ENCODE measurements at regions of chr3 and their contacts with region 1.

Region 1: DNA sequence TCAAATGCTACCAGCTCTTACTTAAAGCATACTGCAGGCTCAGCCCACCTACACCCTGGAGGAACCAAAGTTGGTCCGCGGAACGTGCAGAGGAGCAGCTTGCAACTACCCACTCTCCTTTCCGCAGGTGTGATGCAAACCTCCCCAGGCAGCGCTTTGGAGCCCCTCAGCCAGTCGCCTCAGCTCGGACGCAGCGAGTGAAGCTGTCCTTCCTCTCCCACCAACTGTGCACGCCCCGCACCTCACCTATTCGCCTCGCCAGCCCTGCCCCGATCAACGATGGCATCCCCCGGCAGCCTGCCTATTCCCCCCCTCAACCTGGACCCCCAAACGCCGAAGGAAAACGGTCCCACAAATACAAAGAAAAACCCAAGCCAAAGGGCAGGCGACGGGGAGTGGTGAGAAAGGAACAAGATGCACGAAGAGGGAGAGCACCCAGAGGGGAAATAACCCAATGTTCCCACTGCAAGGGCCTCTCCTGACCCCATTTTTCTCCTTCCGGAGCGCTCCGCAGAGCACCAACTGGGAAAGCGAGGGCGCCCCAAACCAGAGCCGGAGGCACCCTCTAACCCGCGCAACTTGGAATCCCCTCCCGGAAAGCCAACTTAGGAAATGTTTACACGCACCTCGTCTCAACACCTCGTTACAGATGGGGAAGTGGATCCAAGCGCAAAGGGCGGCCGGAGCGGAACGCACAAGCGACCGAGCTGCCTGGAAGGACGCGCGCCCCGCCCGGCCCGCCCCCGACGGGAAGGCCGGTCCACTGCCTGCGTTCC is 665 bp downstream of the GLB1 start:
- DNase-seq: peak; percentile 51 to 72 (median 63)
- H3K4me3 ChIP-seq: peak overlapping the region; percentile 77 to 98 (median 85)
- H3K4me3 Mint-ChIP-seq: peak overlapping the region; percentile 99
- H3K27ac ChIP-seq: peak overlapping the region; percentile 79 to 97
- H3K27ac Mint-ChIP-seq: peak overlapping the region; percentile 93 to 97 (median 96)
- H3K4me1 ChIP-seq: peaks cover 17 to 24% of the 10 kb centered on the region in 2 donors
- H3K4me1 Mint-ChIP-seq: peaks cover 35% of the 10 kb centered on the region
- H3K27me3 ChIP-seq: no peaks in the 10 kb centered on the region
- H3K27me3 Mint-ChIP-seq: peaks cover 0 to 7% (median 2%) of the 10 kb centered on the region in 3 donors
- CTCF ChIP-seq: no peak

Region 2: GRCh38 chr3:33113772-33114621 is 17.7 kb after region 1 on chr3 and contains the start of gene CRTAP:
- intact Hi-C with region 1: loop called in 1 of 2 experiments (anchors 2 kb)
- DNase-seq: peak; percentile 85 to 90 (median 90)
- H3K4me3 ChIP-seq: peak within 1 kb of the TSS; percentile 60 to 89 (median 84)
- H3K4me3 Mint-ChIP-seq: peak within 1 kb of the TSS; percentile 80 to 90
- H3K27ac ChIP-seq: peak within 1 kb of the TSS; percentile 86 to 91
- H3K27ac Mint-ChIP-seq: peak within 1 kb of the TSS; percentile 88 to 98 (median 94)
- H3K4me1 ChIP-seq: peaks cover 54 to 69% of the 10 kb centered on the region in 2 donors
- H3K4me1 Mint-ChIP-seq: peaks cover 69% of the 10 kb centered on the region
- H3K27me3 ChIP-seq: no peaks in the 10 kb centered on the region
- H3K27me3 Mint-ChIP-seq: peaks cover 0 to 2% (median 0%) of the 10 kb centered on the region in 3 donors
- CTCF ChIP-seq: no peak
- polyA plus RNA-seq, gene CRTAP: 134 to 321 (median 317) TPM

Region 3: DNA sequence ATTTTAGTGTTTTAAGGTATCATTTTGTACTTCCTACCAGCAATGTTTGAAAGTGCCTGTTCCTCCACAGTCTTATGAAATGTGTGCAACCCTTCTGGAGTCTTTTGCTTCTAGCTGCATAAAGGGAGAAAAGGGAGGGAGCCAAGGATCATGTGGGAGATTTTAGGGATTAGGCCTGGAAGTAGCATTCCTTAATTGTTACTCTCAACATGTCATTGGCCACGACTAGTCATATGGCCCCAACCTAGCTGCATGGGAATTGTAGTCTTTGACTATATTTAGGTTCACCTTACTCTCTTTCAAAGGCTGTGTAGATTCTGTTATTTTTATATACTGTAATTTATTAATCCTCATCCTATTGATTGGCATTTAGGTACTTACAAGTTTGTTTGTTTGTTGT is 32.4 kb after region 1 on chr3:
- intact Hi-C with region 1: no loop called
- DNase-seq: no peak
- H3K4me3 ChIP-seq: no peak overlapping the region
- H3K4me3 Mint-ChIP-seq: no peak overlapping the region
- H3K27ac ChIP-seq: no peak overlapping the region
- H3K27ac Mint-ChIP-seq: no peak overlapping the region
- H3K4me1 ChIP-seq: no peaks in the 10 kb centered on the region
- H3K4me1 Mint-ChIP-seq: peaks cover 2% of the 10 kb centered on the region
- H3K27me3 ChIP-seq: no peaks in the 10 kb centered on the region
- H3K27me3 Mint-ChIP-seq: no peaks in the 10 kb centered on the region
- CTCF ChIP-seq: no peak